CD4-positive, alpha-beta T cell (primary cell): ENCODE measurements at regions of chrX and their contacts with region 1.

Region 1: GRCh38 chrX:12946838-12947544 is 27.9 kb upstream of the TMSB4X start:
- DNase-seq: peak; percentile 60 to 87 (median 69)
- ATAC-seq: peak; percentile 21
- H3K4me3 ChIP-seq: no peak overlapping the region
- H3K4me3 Mint-ChIP-seq: peak overlapping the region; percentile 75
- H3K27ac ChIP-seq: peak overlapping the region; percentile 29 to 59
- H3K27ac Mint-ChIP-seq: peak overlapping the region; percentile 95
- H3K4me1 ChIP-seq: peaks cover 49% of the 10 kb centered on the region
- H3K4me1 Mint-ChIP-seq: peaks cover 58% of the 10 kb centered on the region
- H3K27me3 ChIP-seq: no peaks in the 10 kb centered on the region
- H3K27me3 Mint-ChIP-seq: no peaks in the 10 kb centered on the region
- CTCF ChIP-seq: peak; percentile 84

Region 2: GRCh38 chrX:12936947-12937346 is 10.0 kb before region 1 on chrX:
- CTCF ChIA-PET with region 1: interaction called, 15 read pairs
- POLR2A ChIA-PET with region 1: no interaction called
- intact Hi-C with region 1: no loop called
- DNase-seq: no peak
- ATAC-seq: no peak
- H3K4me3 ChIP-seq: no peak overlapping the region
- H3K4me3 Mint-ChIP-seq: no peak overlapping the region
- H3K27ac ChIP-seq: no peak overlapping the region
- H3K27ac Mint-ChIP-seq: no peak overlapping the region
- H3K4me1 ChIP-seq: no peaks in the 10 kb centered on the region
- H3K4me1 Mint-ChIP-seq: no peaks in the 10 kb centered on the region
- H3K27me3 ChIP-seq: no peaks in the 10 kb centered on the region
- H3K27me3 Mint-ChIP-seq: no peaks in the 10 kb centered on the region
- CTCF ChIP-seq: no peak

Region 3: DNA sequence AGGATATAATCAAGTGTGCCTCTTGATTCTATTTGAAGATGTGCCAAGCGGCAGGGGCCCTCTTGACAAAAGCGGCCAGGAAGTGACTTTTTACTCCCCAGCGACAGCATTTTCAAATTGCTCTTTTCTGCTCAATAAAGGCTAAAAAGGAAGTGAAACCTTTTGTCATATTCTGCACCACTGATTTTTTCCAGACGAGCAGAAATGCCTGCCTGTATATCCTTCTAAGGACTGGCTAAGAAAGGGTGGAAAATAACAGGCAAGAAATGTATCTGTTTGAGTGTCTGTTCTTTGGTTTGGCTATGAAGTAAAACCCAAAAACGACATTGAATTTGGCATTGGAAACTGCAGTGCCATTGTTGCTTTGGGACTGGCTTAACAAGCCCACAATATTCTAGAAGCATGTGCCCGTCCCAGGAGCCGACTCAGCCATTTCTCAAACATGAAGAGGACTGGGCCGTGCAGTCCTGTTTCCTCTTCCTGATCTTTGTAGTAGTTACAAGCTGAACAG is 53.4 kb after region 1 on chrX:
- CTCF ChIA-PET with region 1: interaction called, 22 read pairs
- POLR2A ChIA-PET with region 1: interaction called, 13 read pairs
- intact Hi-C with region 1: loop called in 1 of 2 experiments (anchors 10 kb)
- DNase-seq: peak in 7 of 14 experiments; percentile 35 to 76 (median 60)
- ATAC-seq: peak; percentile 47
- H3K4me3 ChIP-seq: peak overlapping the region; percentile 37
- H3K4me3 Mint-ChIP-seq: peak overlapping the region; percentile 89
- H3K27ac ChIP-seq: peak overlapping the region; percentile 72 to 85
- H3K27ac Mint-ChIP-seq: peak overlapping the region; percentile 90
- H3K4me1 ChIP-seq: peaks cover 56% of the 10 kb centered on the region
- H3K4me1 Mint-ChIP-seq: peaks cover 83% of the 10 kb centered on the region
- H3K27me3 ChIP-seq: no peaks in the 10 kb centered on the region
- H3K27me3 Mint-ChIP-seq: no peaks in the 10 kb centered on the region
- CTCF ChIP-seq: no peak

Region 4: DNA sequence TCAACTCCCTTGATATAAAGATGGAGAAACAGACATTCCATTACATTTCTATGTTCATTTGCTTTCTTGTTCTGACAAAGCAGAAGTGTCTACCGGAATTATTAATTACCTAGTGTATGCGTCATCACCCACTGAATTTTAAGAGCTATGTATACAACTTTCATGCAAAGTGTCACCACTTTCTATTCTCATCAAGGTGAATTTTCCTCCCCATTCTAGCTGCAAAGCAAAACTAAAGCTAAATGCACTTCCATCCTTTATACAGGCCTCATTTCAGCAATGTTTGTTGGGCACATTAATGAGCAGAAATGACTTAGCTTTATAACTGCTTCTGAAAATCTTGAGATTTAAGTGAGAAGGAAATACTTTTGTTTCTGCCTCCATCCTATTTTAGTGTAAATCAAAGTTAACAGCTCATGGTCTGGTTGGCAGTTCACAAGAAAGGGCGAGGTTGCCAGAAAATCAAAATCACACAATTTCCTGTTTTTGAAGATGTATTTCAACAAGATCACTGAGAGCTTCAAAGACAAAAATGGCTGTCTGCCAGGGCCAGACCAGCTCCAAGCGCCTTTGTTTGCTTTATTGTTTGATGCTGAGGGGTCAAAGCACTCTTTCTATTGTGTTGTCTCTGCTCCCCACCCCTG is 104.7 kb after region 1 on chrX:
- CTCF ChIA-PET with region 1: interaction called, 9 read pairs
- POLR2A ChIA-PET with region 1: interaction called, 19 read pairs
- intact Hi-C with region 1: no loop called
- DNase-seq: peak in 13 of 14 experiments; percentile 30 to 77 (median 55)
- ATAC-seq: peak; percentile 83
- H3K4me3 ChIP-seq: no peak overlapping the region
- H3K4me3 Mint-ChIP-seq: peak overlapping the region; percentile 81
- H3K27ac ChIP-seq: peak overlapping the region; percentile 63 to 78
- H3K27ac Mint-ChIP-seq: peak overlapping the region; percentile 98
- H3K4me1 ChIP-seq: peaks cover 53% of the 10 kb centered on the region
- H3K4me1 Mint-ChIP-seq: peaks cover 82% of the 10 kb centered on the region
- H3K27me3 ChIP-seq: no peaks in the 10 kb centered on the region
- H3K27me3 Mint-ChIP-seq: no peaks in the 10 kb centered on the region
- CTCF ChIP-seq: no peak

Region 5: GRCh38 chrX:13151828-13152510 is 205.0 kb after region 1 on chrX:
- CTCF ChIA-PET with region 1: interaction called, 6 read pairs
- POLR2A ChIA-PET with region 1: no interaction called
- intact Hi-C with region 1: loop called in 1 of 2 experiments (anchors 5 kb)
- DNase-seq: peak in 10 of 14 experiments; percentile 5 to 91 (median 36)
- ATAC-seq: peak; percentile 89
- H3K4me3 ChIP-seq: peak overlapping the region; percentile 7
- H3K4me3 Mint-ChIP-seq: peak overlapping the region; percentile 62
- H3K27ac ChIP-seq: peak overlapping the region in 1 of 2 donors; percentile 62
- H3K27ac Mint-ChIP-seq: peak overlapping the region; percentile 82
- H3K4me1 ChIP-seq: peaks cover 16% of the 10 kb centered on the region
- H3K4me1 Mint-ChIP-seq: peaks cover 15% of the 10 kb centered on the region
- H3K27me3 ChIP-seq: no peaks in the 10 kb centered on the region
- H3K27me3 Mint-ChIP-seq: no peaks in the 10 kb centered on the region
- CTCF ChIP-seq: no peak

Region 6: DNA sequence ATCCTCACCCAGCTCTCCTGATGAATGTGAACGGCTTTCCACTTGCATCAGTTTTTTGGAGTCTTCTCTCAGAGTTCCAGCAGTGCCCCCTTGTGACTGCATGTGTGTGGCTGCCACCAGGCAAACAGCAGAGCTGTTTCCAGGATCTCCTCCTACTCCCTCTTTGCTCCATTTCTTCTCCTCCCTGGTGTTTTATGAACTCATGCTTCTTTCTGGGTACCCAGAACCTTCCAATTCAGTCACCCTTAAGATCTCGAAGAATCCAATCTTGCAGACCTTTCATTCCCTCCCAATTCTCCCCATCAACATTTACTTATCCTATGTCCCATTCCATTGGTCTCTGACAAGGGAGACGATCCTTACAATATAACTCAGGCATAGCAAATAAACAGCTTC is 699.2 kb after region 1 on chrX:
- CTCF ChIA-PET with region 1: interaction called, 3 read pairs
- POLR2A ChIA-PET with region 1: no interaction called
- intact Hi-C with region 1: loop called in 1 of 2 experiments (anchors 5 kb)
- DNase-seq: peak in 11 of 14 experiments; percentile 2 to 52 (median 19)
- ATAC-seq: no peak
- H3K4me3 ChIP-seq: no peak overlapping the region
- H3K4me3 Mint-ChIP-seq: no peak overlapping the region
- H3K27ac ChIP-seq: no peak overlapping the region
- H3K27ac Mint-ChIP-seq: no peak overlapping the region
- H3K4me1 ChIP-seq: no peaks in the 10 kb centered on the region
- H3K4me1 Mint-ChIP-seq: peaks cover 11% of the 10 kb centered on the region
- H3K27me3 ChIP-seq: no peaks in the 10 kb centered on the region
- H3K27me3 Mint-ChIP-seq: no peaks in the 10 kb centered on the region
- CTCF ChIP-seq: no peak